ENCODE measurements at regions of chr10 and their contacts with region 1.

Region 1: GRCh38 chr10:124647421-124648130 is 96.6 kb downstream of the FAM53B start:
- DNase-seq: peak; percentile 67
- H3K4me3 Mint-ChIP-seq: peak overlapping the region; percentile 45
- H3K27ac Mint-ChIP-seq: peak overlapping the region; percentile 85
- H3K4me1 Mint-ChIP-seq: peaks cover 78% of the 10 kb centered on the region
- H3K27me3 Mint-ChIP-seq: no peaks in the 10 kb centered on the region

Region 2: DNA sequence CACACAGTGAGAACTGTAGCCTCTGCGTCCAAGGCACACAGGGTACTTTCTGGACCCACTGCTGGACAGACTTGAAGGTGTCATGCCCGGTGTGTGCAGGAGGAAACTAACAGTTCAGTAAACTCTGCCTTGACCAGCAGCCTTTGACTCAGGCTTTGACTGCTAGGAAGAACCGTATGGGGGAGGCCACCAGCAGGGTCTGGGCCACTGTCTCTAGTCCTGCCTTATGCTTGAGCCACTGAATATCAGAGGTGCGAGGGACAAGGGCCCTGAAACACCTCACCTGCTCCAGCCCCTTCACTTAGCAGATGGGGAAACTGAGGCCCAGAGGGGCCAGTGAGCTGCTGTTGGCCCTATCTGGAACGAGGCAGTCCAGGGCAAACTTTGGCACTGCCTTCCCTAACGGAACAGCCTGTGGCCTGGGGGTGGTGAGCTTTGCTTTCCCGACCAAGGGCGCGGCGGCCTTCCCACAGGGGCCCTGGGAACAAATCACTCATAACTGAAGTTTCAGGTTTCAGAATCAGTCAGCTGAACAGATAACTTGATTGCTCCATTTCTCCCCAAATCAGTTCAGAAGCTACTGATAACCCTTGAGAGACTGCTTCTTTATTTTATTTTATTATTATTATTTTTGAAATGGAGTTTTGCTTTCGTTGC is 33.4 kb before region 1 on chr10:
- intact Hi-C with region 1: loop called (anchors 1 kb)
- DNase-seq: peak; percentile 41
- H3K4me3 Mint-ChIP-seq: no peak overlapping the region
- H3K27ac Mint-ChIP-seq: no peak overlapping the region
- H3K4me1 Mint-ChIP-seq: peaks cover 40% of the 10 kb centered on the region
- H3K27me3 Mint-ChIP-seq: peaks cover 2% of the 10 kb centered on the region

Region 3: DNA sequence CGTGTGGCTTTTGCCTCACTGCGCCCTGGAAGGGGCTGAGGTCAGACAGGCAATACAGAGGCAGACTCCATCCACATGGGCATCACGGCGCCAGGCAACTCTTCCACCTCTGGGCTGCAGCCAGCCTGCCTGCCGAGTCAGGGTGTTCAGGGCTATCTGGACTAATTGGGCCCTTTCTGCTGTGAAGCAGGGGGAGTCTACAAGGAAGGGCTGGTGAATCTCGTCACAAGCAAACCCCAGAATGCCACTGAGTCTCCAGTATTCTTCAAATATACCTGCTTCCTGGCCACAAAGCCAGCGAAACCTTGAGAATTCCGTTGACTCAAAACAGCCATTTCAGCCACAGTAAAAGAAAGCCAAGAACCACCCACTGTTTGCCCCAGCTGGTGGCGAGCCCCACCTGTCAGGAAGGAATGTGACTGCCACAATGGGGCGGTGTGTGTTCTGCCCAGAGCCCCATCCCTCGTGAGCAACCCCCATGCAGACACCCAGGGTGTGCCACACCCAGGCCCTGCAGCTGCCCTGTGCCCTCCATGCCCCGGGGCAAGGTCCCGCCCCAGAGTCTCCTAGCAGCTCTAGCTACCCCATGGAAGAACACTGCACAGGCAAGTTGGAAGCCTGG is 20.7 kb before region 1 on chr10:
- intact Hi-C with region 1: loop called (anchors 1 kb)
- DNase-seq: peak; percentile 42
- H3K4me3 Mint-ChIP-seq: peak overlapping the region; percentile 42
- H3K27ac Mint-ChIP-seq: peak overlapping the region; percentile 45
- H3K4me1 Mint-ChIP-seq: peaks cover 31% of the 10 kb centered on the region
- H3K27me3 Mint-ChIP-seq: peaks cover 13% of the 10 kb centered on the region

Region 4: GRCh38 chr10:124697830-124698544 is 50.4 kb after region 1 on chr10:
- intact Hi-C with region 1: loop called (anchors 2 kb)
- DNase-seq: peak; percentile 52
- H3K4me3 Mint-ChIP-seq: peak overlapping the region; percentile 76
- H3K27ac Mint-ChIP-seq: peak overlapping the region; percentile 98
- H3K4me1 Mint-ChIP-seq: peaks cover 96% of the 10 kb centered on the region
- H3K27me3 Mint-ChIP-seq: no peaks in the 10 kb centered on the region